ENCODE measurements at regions of chr22 and their contacts with region 1.

Region 1: GRCh38 chr22:38311323-38311620 is 6.0 kb downstream of the CSNK1E start:
- DNase-seq: no peak
- H3K4me3 ChIP-seq: no peak overlapping the region
- H3K27ac ChIP-seq: no peak overlapping the region
- H3K4me1 ChIP-seq: peaks cover 9 to 36% (median 26%) of the 10 kb centered on the region in 4 experiments
- H3K27me3 ChIP-seq: no peaks in the 10 kb centered on the region
- CTCF ChIP-seq: no peak
- EP300 ChIP-seq: no peak
- POLR2A ChIP-seq: no peak
- RAD21 ChIP-seq: no peak

Region 2: GRCh38 chr22:38291201-38291777 is 20.0 kb before region 1 on chr22:
- CTCF ChIA-PET with region 1: interaction called, 18 read pairs
- POLR2A ChIA-PET with region 1: interaction called, 20 read pairs
- DNase-seq: no peak
- H3K4me3 ChIP-seq: no peak overlapping the region
- H3K27ac ChIP-seq: no peak overlapping the region
- H3K4me1 ChIP-seq: peaks cover 0 to 3% (median 2%) of the 10 kb centered on the region in 4 experiments; a peak in 5 of 7 replicates
- H3K27me3 ChIP-seq: no peaks in the 10 kb centered on the region
- CTCF ChIP-seq: peak in 1 of 3 experiments; percentile 17; a peak in 1 of 4 replicates
- EP300 ChIP-seq: no peak
- POLR2A ChIP-seq: no peak
- RAD21 ChIP-seq: 0 out of 4 replicates have a peak, but pooled peaks of 1 of the 2 experiments have one; percentile 1

Measured in H1 (cell line).